Esophagus muscularis mucosa (tissue), 4 donors: ENCODE measurements at regions of chr17 and their contacts with region 1.

Region 1: GRCh38 chr17:21284319-21285163 is at the start of gene MAP2K3:
- DNase-seq: peak; percentile 100
- H3K4me3 ChIP-seq: peak within 1 kb of the TSS; percentile 82 to 93 (median 86)
- H3K27ac ChIP-seq: peak within 1 kb of the TSS; percentile 93 to 98 (median 96)
- H3K4me1 ChIP-seq: peaks cover 48 to 81% (median 78%) of the 10 kb centered on the region in 4 donors
- H3K27me3 ChIP-seq: no peaks in the 10 kb centered on the region
- CTCF ChIP-seq: no peak
- EP300 ChIP-seq: no peak
- POLR2A ChIP-seq: peak; percentile 90
- total RNA-seq, gene MAP2K3: 23.3 to 42.4 (median 30.5) TPM

Region 2: GRCh38 chr17:21043286-21044232 is 241.0 kb before region 1 on chr17:
- intact Hi-C with region 1: loop called (anchors 5 kb)
- DNase-seq: peak; percentile 99
- H3K4me3 ChIP-seq: peak overlapping the region; percentile 54 to 100 (median 90)
- H3K27ac ChIP-seq: peak overlapping the region; percentile 93 to 100 (median 100)
- H3K4me1 ChIP-seq: peaks cover 24 to 39% (median 37%) of the 10 kb centered on the region in 4 donors
- H3K27me3 ChIP-seq: no peaks in the 10 kb centered on the region
- CTCF ChIP-seq: peak; percentile 88 to 96 (median 92)
- EP300 ChIP-seq: no peak
- POLR2A ChIP-seq: no peak

Region 3: DNA sequence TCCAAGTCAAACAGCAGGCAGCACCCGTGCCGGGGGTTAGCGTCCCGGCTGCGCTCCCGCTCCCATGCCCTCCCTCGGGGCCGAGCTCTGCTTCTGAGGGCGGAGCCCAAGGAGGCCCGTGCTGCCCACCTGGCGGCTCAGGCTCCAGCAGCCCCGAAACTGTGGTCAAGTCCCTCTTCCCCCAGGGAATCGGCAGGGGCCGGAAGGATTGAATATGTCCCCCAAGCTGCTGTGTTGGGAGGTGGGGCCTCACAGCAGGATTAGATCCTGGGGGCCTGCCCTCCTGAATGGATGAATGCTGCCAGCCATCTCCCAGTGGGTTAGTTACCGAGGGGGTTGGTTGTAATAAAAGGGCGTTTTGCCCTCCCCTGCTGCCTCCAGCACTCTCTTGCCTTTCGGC is 33.9 kb after region 1 on chr17:
- intact Hi-C with region 1: loop called (anchors 5 kb)
- DNase-seq: no peak
- H3K4me3 ChIP-seq: no peak overlapping the region
- H3K27ac ChIP-seq: no peak overlapping the region
- H3K4me1 ChIP-seq: peaks cover 3 to 12% (median 10%) of the 10 kb centered on the region in 4 donors
- H3K27me3 ChIP-seq: no peaks in the 10 kb centered on the region
- CTCF ChIP-seq: no peak
- EP300 ChIP-seq: no peak
- POLR2A ChIP-seq: no peak

Region 4: DNA sequence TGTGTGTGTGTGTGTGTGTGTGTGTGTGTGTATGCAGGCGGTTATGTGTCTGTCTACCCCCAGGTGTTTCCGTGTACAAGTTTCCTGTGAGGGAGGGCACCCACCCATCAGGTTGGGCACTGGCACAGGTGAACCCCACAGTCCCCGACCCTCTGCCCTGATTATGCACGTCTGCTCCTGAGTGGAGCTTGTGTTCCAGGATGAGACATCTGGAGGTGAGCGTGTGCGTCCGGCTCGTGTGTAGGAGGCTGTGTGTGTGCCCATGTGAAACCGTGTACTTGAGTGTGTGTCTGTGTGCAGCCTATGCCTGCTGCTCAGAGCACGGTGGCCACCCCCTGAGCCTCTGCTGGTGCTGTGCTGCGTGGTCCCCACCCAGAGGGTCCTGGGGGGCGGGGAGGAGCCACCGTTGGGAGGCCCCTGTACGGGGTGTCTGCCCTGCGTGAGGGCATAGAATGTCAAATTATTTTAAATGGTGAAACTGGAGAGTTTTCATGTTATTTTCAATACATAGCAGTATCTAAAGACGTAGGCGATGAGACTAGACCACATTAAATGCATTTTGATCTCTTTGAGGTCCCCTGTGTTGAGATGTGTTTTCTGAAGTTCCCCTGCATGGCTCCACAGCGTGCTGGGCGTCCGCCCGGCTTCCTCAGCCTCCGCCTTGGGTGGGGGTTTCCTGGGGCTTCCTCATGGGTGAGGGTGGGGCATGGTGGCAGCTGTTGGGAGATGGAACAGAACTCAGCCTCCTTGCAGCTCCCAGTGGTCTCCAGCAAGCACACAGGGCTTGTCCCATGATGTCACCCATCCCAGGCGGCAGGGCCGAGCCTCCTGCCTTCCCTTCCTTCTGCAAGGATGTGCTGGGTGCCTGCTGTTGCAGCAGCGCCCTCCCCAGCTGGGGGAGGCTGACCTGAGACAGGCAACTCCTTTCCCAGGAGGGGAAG is 135.0 kb after region 1 on chr17:
- intact Hi-C with region 1: no loop called
- DNase-seq: no peak
- H3K4me3 ChIP-seq: no peak overlapping the region
- H3K27ac ChIP-seq: no peak overlapping the region
- H3K4me1 ChIP-seq: peaks cover 0 to 9% (median 2%) of the 10 kb centered on the region in 4 donors
- H3K27me3 ChIP-seq: no peaks in the 10 kb centered on the region
- CTCF ChIP-seq: no peak
- EP300 ChIP-seq: no peak
- POLR2A ChIP-seq: no peak